Activated CD4-positive, alpha-beta T cell treated with anti-CD3 and anti-CD28 coated beads, Interleukin-2, amount 10 ng/mL, durations not matched to agents 24 days and 14 days (primary cell): ENCODE measurements at regions of chr1 and their contacts with region 1.

Region 1: DNA sequence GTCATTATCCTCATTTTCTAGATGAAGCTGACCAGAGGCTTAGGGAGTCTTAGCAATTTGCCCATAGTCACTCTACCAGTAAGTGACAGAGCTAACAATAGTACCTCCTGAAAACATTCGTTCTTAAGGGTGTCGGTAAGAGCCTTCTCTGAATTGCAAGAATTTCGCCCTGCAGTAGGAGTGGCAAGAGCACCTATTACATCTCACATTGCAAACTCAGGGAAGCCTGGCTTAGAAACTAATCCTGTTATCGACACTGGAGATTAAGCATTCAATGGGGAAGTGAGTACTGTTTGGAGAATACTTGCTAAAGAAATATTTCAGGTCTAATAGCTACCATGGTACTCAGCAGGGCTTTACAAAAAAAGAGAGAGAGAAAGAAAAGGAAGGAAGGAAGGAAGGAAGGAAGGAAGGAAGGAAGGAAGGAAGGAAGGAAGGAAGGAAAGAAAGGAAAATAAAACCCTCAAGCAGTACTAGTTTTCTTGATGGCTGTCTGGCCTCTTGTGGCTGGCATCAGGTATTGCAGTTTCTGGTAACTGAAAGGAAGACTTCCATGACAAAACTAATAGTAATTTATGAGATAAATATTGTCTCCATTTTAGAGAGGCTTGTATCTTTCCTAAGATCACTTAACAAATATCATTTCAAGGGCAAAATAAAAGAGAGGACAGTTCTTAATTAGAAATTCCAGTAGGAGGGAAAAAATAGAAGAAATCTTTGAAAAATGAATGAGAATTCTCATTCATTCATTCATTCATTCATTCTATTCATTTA is 10.4 kb downstream of the C1orf226 start:
- DNase-seq: no peak
- H3K4me3 Mint-ChIP-seq: no peak overlapping the region
- H3K27ac Mint-ChIP-seq: no peak overlapping the region
- H3K4me1 Mint-ChIP-seq: peaks cover 2% of the 10 kb centered on the region
- H3K27me3 Mint-ChIP-seq: peaks cover 12% of the 10 kb centered on the region

Region 2: DNA sequence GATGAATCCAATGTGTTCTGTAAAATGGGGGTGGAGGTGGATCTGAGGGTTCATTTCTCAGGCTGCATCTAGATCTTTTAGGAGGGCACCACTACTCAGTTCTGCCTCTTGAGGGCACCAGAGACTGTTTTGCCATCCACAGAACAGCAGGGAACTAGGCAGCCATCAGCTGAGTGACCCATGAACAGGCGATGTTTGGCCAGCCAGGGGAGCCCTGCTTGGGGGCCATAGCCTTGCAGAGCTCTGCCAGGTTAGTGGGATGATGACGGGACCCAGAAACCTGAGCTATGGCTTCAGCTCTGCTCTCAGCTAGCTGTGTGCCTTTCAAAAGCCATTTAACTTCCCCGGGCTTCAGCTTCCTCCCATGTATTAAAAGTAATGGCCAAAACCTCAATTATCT is 335.9 kb before region 1 on chr1:
- intact Hi-C with region 1: loop called (anchors 1 kb)
- DNase-seq: peak; percentile 81
- H3K4me3 Mint-ChIP-seq: no peak overlapping the region
- H3K27ac Mint-ChIP-seq: no peak overlapping the region
- H3K4me1 Mint-ChIP-seq: no peaks in the 10 kb centered on the region
- H3K27me3 Mint-ChIP-seq: peaks cover 15% of the 10 kb centered on the region

Region 3: GRCh38 chr1:162756523-162756922 is 364.5 kb after region 1 on chr1:
- intact Hi-C with region 1: no loop called
- DNase-seq: no peak
- H3K4me3 Mint-ChIP-seq: no peak overlapping the region
- H3K27ac Mint-ChIP-seq: no peak overlapping the region
- H3K4me1 Mint-ChIP-seq: no peaks in the 10 kb centered on the region
- H3K27me3 Mint-ChIP-seq: no peaks in the 10 kb centered on the region